Natural killer cell (primary cell): ENCODE measurements at regions of chr11 and their contacts with region 1.

Region 1: DNA sequence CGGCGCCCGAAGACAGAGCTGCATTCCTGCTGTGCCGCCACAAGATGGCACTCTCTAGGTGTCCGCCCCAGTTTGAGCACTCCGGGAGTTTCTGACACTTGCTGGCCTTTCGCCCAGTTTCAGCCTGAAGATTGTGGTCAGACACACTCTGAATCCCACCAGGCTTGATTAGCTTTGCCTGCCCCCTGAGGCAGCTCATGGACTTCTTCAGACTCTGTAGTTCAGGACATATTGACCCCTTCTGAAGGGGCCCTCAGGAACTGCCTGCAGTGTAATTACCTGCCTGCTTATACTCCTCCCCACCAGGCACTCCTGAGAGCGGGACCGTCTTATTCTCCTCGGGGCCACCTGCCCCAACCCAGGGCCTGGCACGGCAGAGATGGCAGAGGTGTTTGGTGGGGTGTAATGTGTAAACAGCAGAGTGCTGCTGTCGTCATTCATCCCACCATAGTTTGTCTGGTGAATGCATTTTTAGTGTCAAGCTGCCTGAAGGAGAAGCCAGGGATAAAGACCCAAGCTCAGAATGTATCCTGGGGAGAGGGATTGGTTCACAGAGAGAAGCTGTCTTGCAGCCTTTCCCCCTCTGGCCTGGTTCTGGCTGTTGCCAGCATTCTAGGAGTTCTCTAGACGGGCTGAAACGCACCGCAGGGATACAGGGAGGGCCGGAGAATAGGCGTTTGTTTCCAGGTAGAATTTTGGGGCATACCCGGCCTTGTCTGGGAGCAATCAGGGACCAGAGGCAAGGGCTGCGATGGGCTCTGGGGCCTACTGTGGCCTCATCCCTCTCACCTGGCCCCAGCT is 46.4 kb downstream of the EIF3F start:
- DNase-seq: peak; percentile 29 to 73
- ATAC-seq: peak; percentile 72 to 93 (median 76)
- H3K4me3 ChIP-seq: no peak overlapping the region
- H3K4me3 Mint-ChIP-seq: no peak overlapping the region
- H3K27ac ChIP-seq: no peak overlapping the region
- H3K27ac Mint-ChIP-seq: no peak overlapping the region
- H3K4me1 ChIP-seq: peaks cover 9% of the 10 kb centered on the region
- H3K4me1 Mint-ChIP-seq: peaks cover 7 to 9% of the 10 kb centered on the region in 2 donors
- H3K27me3 ChIP-seq: peaks cover 2% of the 10 kb centered on the region
- H3K27me3 Mint-ChIP-seq: peaks cover 21 to 41% of the 10 kb centered on the region in 2 donors
- CTCF ChIP-seq: peak; percentile 63

Region 2: GRCh38 chr11:7804226-7804625 is 229.3 kb before region 1 on chr11:
- intact Hi-C with region 1: no loop called
- DNase-seq: no peak
- ATAC-seq: no peak
- H3K4me3 ChIP-seq: no peak overlapping the region
- H3K4me3 Mint-ChIP-seq: no peak overlapping the region
- H3K27ac ChIP-seq: no peak overlapping the region
- H3K27ac Mint-ChIP-seq: no peak overlapping the region
- H3K4me1 ChIP-seq: no peaks in the 10 kb centered on the region
- H3K4me1 Mint-ChIP-seq: no peaks in the 10 kb centered on the region
- H3K27me3 ChIP-seq: no peaks in the 10 kb centered on the region
- H3K27me3 Mint-ChIP-seq: peaks cover 0 to 2% of the 10 kb centered on the region in 2 donors
- CTCF ChIP-seq: no peak

Region 3: GRCh38 chr11:8099291-8099899 is 65.9 kb after region 1 on chr11:
- intact Hi-C with region 1: loop called (anchors 1 kb)
- DNase-seq: peak; percentile 39 to 81
- ATAC-seq: peak in 1 of 3 donors; percentile 56
- H3K4me3 ChIP-seq: no peak overlapping the region
- H3K4me3 Mint-ChIP-seq: no peak overlapping the region
- H3K27ac ChIP-seq: no peak overlapping the region
- H3K27ac Mint-ChIP-seq: no peak overlapping the region
- H3K4me1 ChIP-seq: no peaks in the 10 kb centered on the region
- H3K4me1 Mint-ChIP-seq: no peaks in the 10 kb centered on the region
- H3K27me3 ChIP-seq: no peaks in the 10 kb centered on the region
- H3K27me3 Mint-ChIP-seq: no peaks in the 10 kb centered on the region
- CTCF ChIP-seq: peak; percentile 63

Region 4: DNA sequence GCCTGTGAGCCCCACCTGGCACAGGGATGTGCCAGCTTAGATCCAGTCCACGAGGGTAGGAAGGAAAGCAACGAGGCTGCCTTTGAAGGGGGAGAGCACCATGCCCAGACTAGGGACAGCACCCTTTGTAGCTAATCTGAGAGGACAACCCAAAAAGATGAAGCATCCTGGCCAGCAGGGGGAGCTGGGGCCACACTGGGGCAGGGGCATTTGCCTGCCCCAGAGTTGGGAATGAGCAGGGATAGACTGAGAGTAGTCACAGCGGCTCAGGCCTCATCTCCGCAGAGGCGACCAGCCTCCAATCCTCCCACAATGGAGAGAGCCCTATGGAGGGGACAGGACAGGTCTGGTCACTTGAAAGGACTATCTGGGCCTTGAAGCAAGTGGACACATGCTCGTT is 213.8 kb after region 1 on chr11:
- intact Hi-C with region 1: no loop called
- DNase-seq: no peak
- ATAC-seq: no peak
- H3K4me3 ChIP-seq: no peak overlapping the region
- H3K4me3 Mint-ChIP-seq: no peak overlapping the region
- H3K27ac ChIP-seq: no peak overlapping the region
- H3K27ac Mint-ChIP-seq: no peak overlapping the region
- H3K4me1 ChIP-seq: no peaks in the 10 kb centered on the region
- H3K4me1 Mint-ChIP-seq: no peaks in the 10 kb centered on the region
- H3K27me3 ChIP-seq: no peaks in the 10 kb centered on the region
- H3K27me3 Mint-ChIP-seq: peaks cover 10 to 16% of the 10 kb centered on the region in 2 donors
- CTCF ChIP-seq: no peak